Posterior vena cava (tissue), 2 donors: ENCODE measurements at regions of chr17 and their contacts with region 1.

Region 1: DNA sequence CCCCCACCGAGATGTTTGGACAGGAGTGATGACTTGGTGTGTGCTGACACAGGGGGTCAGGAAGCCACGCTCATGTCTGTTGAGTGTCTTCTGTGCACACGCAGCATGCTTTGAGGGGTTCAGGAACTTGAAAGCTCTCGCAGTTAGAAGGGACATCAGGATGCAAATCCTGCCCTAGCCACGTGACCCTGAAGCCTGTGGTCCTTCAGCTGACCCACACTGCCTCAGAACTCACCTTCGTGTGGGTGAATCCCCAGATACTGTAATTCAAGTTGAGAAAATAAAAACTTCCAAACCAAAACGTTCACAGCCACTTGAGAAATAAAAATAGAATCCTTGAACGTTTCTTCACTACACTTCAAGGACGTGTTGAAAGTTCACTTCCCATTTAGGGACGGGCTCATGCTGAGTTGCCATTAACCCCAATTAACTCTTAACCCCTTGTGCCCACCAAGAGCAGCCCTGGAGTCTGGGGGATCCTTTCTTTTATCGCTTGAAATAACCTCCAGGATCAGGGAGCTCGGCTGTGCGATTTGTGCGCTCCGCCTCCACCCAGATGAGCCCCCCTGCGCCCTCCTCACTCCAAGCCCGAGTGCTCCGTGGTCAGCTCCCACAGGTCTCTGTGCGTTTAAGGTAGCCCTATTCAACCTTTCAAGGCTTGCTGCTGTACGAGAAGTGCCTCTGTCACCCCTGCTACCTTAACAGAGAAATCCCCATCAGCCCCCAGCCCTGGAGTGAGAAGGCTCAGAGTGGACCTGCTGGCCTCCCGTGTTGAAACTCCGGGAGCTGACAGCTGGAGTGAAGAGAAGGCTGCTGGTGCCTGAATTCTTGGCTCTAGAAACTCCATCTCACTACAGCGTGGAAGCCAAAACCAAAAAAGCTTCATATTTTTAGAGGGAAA is 36.2 kb upstream of the NAT9 start:
- DNase-seq: no peak

Region 2: GRCh38 chr17:74825952-74826719 is 13.8 kb after region 1 on chr17:
- intact Hi-C with region 1: loop called in 1 of 2 experiments (anchors 1 kb)
- DNase-seq: no peak